SK-N-SH (cell line): ENCODE measurements at regions of chr1 and their contacts with region 1.

Region 1: DNA sequence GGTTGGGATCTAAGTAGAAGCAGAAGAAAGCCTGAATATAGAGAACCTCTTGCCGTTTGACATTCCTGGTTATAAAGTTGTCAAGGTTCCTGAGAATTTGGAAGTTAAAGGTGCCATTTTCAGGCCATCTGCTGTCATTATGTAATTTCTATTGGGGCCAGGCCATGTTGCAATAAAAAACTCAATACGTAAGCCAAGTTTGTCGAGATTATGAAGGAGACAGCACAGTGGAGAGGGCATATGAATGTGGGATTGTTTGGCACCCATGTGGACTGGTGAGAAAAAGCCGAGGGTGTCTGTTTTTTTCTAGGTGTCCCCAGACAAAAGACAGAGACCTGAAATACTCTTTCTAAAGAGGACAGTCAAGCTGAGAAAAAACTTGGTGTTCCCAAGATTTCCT is 18.8 kb upstream of the HSD3B1 start:
- DNase-seq: no peak
- H3K4me3 ChIP-seq: no peak overlapping the region
- H3K27ac ChIP-seq: no peak overlapping the region
- H3K4me1 ChIP-seq: no peaks in the 10 kb centered on the region
- H3K27me3 ChIP-seq: no peaks in the 10 kb centered on the region; the same call in 1 of the 2 replicates
- CTCF ChIP-seq: no peak
- EP300 ChIP-seq: no peak
- RAD21 ChIP-seq: no peak

Region 2: GRCh38 chr1:119453021-119453420 is 35.2 kb before region 1 on chr1:
- CTCF ChIA-PET with region 1: no interaction called
- POLR2A ChIA-PET with region 1: no interaction called
- DNase-seq: no peak
- H3K4me3 ChIP-seq: no peak overlapping the region
- H3K27ac ChIP-seq: no peak overlapping the region
- H3K4me1 ChIP-seq: no peaks in the 10 kb centered on the region
- H3K27me3 ChIP-seq: peaks cover 16% of the 10 kb centered on the region
- CTCF ChIP-seq: no peak
- EP300 ChIP-seq: no peak
- RAD21 ChIP-seq: no peak

Region 3: GRCh38 chr1:119475866-119476439 is 12.3 kb before region 1 on chr1:
- CTCF ChIA-PET with region 1: interaction called, 16 read pairs
- POLR2A ChIA-PET with region 1: no interaction called
- DNase-seq: peak; percentile 29
- H3K4me3 ChIP-seq: no peak overlapping the region
- H3K27ac ChIP-seq: no peak overlapping the region
- H3K4me1 ChIP-seq: no peaks in the 10 kb centered on the region
- H3K27me3 ChIP-seq: peaks cover 32% of the 10 kb centered on the region; the same call in 1 of the 2 replicates
- CTCF ChIP-seq: peak; percentile 61
- EP300 ChIP-seq: no peak
- RAD21 ChIP-seq: peak; percentile 53